Activated T-helper 1 cell treated with anti-CD3 and anti-CD28 coated beads, Interleukin-12 subunit alpha, Interleukin-12 subunit beta, Interleukin-2, Interleukin-4 antibody, amounts not matched to agents 30 ng/mL and 10 ng/mL and 1 ng/mL, durations not matched to agents 14 hours and 24 hours and 36 hours (primary cell): ENCODE measurements at regions of chr2 and their contacts with region 1.

Region 1: GRCh38 chr2:20852139-20852538 is 29.2 kb upstream of the LDAH start:
- DNase-seq: no peak
- H3K4me3 Mint-ChIP-seq: no peak overlapping the region
- H3K27ac Mint-ChIP-seq: no peak overlapping the region
- H3K4me1 Mint-ChIP-seq: no peaks in the 10 kb centered on the region
- H3K27me3 Mint-ChIP-seq: peaks cover 2% of the 10 kb centered on the region

Region 2: GRCh38 chr2:20953145-20953824 is 101.1 kb after region 1 on chr2:
- intact Hi-C with region 1: loop called (anchors 1 kb)
- DNase-seq: no peak
- H3K4me3 Mint-ChIP-seq: no peak overlapping the region
- H3K27ac Mint-ChIP-seq: no peak overlapping the region
- H3K4me1 Mint-ChIP-seq: no peaks in the 10 kb centered on the region
- H3K27me3 Mint-ChIP-seq: no peaks in the 10 kb centered on the region